Activated T-helper 2 cell treated with anti-CD3 and anti-CD28 coated beads, Interferon-gamma antibody, Interleukin-2, Interleukin-4, amounts not matched to agents 10 μg/mL and 5 μg/mL and 100 μg/mL, durations not matched to agents 14 hours and 24 hours and 36 hours (primary cell): ENCODE measurements at regions of chr2 and their contacts with region 1.

Region 1: DNA sequence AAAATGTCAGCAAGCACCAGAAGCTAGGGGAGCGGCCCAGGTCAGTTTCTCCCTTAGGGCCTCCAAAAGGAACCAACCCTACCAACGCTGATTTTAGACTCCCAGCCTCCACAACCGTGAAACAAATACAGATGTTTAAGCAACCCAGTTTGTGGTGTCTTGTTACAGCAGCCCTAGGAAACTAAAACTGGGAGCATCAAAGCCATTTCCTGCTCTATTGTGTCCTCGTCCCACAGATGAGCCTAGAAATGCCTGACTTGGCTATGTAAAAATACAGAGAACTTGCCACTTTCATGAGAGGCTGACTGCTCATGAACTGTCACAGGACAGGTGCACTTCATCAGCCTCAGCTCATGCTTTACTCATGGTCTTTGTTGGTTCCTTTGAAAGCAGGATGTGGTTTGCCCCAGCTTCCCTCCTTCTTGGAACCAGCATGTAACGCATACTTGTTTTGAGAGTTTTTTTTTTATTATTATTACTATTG is 97.6 kb upstream of the SLC39A10 start:
- DNase-seq: peak; percentile 82
- H3K4me3 Mint-ChIP-seq: peak overlapping the region; percentile 56
- H3K27ac Mint-ChIP-seq: peak overlapping the region; percentile 90
- H3K4me1 Mint-ChIP-seq: peaks cover 57% of the 10 kb centered on the region
- H3K27me3 Mint-ChIP-seq: no peaks in the 10 kb centered on the region

Region 2: DNA sequence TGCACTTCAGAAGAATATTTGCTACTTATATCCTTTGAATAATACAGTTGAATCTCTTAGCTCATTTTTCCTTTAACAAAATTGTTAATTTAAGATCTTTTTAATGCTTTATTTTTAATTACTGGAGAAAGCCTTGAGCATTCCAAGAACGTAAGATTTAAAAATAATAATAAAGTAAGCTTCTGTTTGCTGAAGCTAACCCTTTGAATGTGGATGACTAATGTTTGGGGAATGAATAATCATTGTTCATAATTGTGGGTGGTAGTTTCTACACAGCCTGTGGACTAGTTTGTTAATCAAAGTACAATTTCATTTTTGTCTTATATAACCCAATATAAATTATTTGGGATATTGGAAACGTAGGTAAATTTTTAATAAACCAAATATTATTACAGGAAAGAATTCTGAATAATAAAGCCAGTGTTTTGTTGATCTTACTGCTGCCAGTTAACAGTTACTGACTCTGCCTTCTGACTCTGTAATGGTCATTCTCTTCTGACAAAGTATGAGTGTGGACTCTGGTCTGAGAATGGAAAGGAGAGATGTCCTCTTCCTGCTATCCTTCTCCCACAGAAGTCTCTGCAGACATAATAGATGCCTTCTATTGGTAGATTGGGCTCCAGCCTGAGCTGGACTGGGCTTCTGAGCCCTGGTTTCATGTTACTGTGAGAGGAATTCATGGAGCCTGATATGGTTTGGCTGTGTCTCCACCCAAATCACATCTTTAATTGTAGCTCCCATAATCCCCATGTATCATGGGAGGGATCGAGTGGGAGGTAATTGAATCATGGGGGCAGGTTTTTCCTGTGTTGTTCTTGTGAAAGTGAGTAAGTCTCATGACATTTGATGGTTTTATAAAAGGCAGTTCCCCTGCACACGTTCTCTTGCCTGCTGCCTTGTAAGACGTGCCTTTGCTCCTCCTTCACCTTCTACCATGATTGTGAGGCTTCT is 195.2 kb before region 1 on chr2:
- intact Hi-C with region 1: loop called (anchors 5 kb)
- DNase-seq: no peak
- H3K4me3 Mint-ChIP-seq: no peak overlapping the region
- H3K27ac Mint-ChIP-seq: no peak overlapping the region
- H3K4me1 Mint-ChIP-seq: peaks cover 22% of the 10 kb centered on the region
- H3K27me3 Mint-ChIP-seq: no peaks in the 10 kb centered on the region

Region 3: GRCh38 chr2:195477248-195477995 is 82.1 kb before region 1 on chr2:
- intact Hi-C with region 1: loop called (anchors 2 kb)
- DNase-seq: no peak
- H3K4me3 Mint-ChIP-seq: no peak overlapping the region
- H3K27ac Mint-ChIP-seq: peak overlapping the region; percentile 33
- H3K4me1 Mint-ChIP-seq: peaks cover 49% of the 10 kb centered on the region
- H3K27me3 Mint-ChIP-seq: no peaks in the 10 kb centered on the region

Region 4: DNA sequence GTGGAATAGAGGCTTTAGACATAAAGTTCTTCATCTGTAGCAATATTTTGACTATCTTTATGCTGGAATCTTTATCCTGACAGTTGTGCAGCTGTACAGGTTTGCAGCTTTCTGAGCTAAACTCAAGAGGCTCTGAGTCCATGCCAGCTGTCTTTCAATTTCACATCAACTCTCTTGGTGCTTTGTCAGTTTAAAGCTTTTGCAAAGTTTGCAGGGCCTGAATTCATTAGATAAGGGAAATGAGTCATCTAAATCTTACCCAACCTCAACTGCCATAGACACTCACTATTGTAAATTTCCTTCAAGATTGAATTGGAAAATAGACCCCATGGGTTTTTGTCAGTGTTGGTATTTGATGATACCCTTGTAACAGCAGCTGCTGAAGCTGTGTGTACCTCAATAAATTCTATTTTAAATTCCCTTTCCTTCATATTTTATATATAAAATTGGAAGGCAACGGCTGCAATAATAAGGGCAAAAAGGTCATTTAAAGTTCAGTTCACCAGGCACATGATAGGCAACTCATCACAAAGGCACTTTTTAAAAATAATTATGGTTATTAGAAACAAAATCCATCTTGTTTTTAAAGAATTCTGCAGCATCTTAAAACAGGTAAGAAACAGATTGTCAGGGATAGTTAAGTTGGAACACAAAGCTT is 72.4 kb before region 1 on chr2:
- intact Hi-C with region 1: loop called (anchors 2 kb)
- DNase-seq: peak; percentile 28
- H3K4me3 Mint-ChIP-seq: no peak overlapping the region
- H3K27ac Mint-ChIP-seq: peak overlapping the region; percentile 45
- H3K4me1 Mint-ChIP-seq: peaks cover 44% of the 10 kb centered on the region
- H3K27me3 Mint-ChIP-seq: no peaks in the 10 kb centered on the region

Region 5: GRCh38 chr2:195543902-195544894 is 15.3 kb before region 1 on chr2:
- intact Hi-C with region 1: loop called (anchors 1 kb)
- DNase-seq: no peak
- H3K4me3 Mint-ChIP-seq: peak overlapping the region; percentile 43
- H3K27ac Mint-ChIP-seq: peak overlapping the region; percentile 71
- H3K4me1 Mint-ChIP-seq: peaks cover 57% of the 10 kb centered on the region
- H3K27me3 Mint-ChIP-seq: no peaks in the 10 kb centered on the region

Region 6: GRCh38 chr2:195575879-195576401 is 16.5 kb after region 1 on chr2:
- intact Hi-C with region 1: loop called (anchors 1 kb)
- DNase-seq: no peak
- H3K4me3 Mint-ChIP-seq: no peak overlapping the region
- H3K27ac Mint-ChIP-seq: no peak overlapping the region
- H3K4me1 Mint-ChIP-seq: peaks cover 49% of the 10 kb centered on the region
- H3K27me3 Mint-ChIP-seq: no peaks in the 10 kb centered on the region

Region 7: DNA sequence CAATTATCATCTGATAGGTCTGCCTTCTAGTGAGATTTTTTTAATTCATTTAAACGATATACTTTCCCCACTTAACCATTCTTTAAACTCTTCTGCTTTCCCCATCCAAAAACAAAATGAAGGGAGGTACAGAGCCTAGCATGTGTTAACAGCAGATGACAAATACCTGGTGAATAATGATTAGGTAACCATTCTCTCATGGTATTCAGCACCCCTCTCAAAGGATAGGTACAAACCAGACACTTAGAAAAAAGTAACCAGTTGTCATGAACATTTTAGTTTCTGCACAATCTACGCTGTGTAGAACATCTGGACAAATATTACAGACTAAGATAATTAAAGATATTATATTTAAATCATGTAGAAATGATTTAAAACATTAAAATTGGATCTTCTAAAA is 452.8 kb after region 1 on chr2:
- intact Hi-C with region 1: no loop called
- DNase-seq: no peak
- H3K4me3 Mint-ChIP-seq: no peak overlapping the region
- H3K27ac Mint-ChIP-seq: no peak overlapping the region
- H3K4me1 Mint-ChIP-seq: no peaks in the 10 kb centered on the region
- H3K27me3 Mint-ChIP-seq: no peaks in the 10 kb centered on the region